GM13977 (cell line): ENCODE measurements at regions of chr9 and their contacts with region 1.

Region 1: DNA sequence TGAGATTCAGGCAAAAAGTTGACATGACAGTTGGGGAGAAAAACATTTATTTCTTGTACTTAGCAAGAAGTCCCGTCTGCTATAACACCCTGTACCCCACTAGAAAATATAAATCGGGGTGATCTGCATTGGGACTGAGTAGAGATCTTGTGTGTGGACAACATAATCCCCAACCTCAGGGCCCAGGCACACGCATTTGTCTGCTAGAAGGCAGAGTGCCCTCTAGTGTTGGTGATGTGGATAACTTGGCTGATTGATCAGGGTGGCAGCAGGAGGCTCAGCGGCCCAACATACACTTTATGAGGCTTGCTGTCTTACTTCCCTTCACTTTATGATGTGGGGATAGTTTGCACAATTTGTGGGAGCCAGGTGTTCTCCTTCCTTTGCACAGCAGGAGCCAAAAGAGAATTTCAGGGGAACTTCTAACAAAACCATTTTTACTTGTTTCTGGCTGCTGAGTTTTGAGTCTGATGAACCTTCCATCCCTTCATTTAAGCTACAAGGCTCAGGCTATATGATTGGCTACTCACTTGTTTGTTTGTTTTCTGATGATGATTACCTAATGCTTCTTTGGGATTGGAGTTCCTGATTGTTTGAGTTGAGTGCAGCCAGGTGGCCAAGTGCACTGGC is 263.2 kb downstream of the DMAC1 start:
- DNase-seq: peak; percentile 26
- CTCF ChIP-seq: peak; percentile 74

Region 2: DNA sequence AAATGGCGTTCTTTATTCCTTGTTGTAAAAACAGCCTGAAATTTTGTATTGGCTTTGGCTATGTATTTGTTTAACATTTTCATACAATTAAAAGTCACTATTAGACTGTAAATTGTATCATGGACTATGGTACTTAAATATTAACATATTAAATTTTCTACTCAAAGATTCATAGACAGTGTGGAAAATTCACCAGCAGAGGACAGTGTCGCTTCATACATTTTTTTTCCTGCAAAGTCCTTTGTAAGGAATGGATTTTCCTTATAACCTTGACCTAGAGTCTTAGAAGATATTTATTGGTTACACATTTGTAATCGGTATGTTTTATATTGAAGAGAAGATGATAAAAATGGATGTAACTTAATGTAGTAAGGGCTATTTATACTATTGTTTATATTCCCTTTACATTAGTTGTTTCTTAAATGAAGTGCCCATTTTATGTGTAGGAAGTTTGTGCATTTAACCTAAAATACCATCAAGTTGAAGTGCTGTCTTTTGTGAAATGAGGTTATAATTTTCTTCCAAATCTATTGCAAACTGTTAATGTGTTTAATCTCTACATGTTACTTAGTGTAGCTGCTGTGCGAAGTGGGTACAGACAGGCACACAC is 628.5 kb before region 1 on chr9:
- in situ Hi-C with region 1: loop called (anchors 25 kb)
- DNase-seq: no peak
- CTCF ChIP-seq: peak; percentile 30

Region 3: DNA sequence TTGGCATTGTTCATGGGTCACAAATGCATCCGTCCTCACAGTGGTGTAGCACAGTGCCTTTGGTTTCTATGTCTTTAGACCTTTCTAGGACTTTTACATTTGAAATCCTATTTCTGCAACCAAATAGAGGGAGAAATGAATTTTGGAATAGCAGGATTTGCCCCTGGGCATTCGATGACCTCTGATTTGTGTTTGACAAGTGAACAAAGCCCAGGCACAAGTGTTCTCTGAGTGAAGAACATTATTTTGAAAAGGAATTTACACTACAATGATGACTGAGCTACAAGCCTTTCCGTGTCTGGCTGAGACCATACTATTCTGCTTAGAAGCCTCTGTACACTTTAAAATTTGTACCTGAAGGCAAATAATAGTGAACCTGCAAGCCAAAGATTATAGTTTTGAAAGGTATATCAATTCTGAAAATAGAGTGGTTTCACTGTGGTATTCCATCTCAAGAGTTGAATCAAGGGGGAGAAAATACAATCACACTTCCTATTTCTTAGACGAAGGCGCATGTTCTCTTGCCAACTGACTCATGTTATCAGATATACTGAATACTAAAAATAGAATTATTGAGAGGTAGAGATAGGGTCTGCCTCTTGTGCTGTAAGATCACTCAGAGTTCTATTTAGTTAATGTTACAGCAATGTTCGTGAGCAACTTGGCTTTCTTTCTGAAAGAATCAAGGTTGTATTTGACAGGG is 481.1 kb before region 1 on chr9:
- in situ Hi-C with region 1: loop called (anchors 25 kb)
- DNase-seq: peak; percentile 7
- CTCF ChIP-seq: no peak

Region 4: DNA sequence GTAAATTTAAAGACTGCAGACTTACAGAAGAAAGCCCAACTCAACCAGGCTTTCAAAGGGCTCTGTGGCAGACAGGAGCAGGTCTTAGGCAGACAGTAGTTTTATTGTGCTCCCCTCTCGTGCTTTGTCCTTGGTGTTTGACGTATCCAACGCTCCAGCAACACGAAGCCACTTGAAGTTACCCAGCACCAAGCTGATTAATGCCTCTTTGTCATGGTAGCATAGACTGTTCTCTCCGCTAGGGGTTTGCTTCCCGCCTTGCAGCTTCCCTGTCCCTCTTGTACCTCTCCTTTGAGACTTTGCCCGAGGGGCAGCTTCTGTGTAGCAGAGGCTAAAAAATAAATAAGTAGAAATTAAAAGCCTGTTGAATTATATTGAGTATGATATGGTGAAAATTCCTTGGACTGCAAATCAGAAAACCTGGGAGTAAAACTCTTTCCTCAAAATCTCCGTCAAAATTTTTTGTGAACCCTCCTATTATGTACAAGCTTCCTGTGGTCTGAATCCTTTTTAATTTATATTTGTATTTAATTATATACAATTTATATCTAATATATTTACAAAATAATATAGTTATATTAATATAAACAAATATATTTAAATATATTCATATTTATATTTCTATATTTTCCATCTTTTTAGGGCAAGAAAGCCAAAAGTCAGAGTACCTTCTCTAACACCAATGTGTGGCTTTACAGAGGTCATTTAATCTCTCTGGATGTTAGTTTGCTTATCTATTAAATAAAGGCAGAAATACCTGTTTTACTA is 142.2 kb before region 1 on chr9:
- in situ Hi-C with region 1: no loop called
- DNase-seq: no peak
- CTCF ChIP-seq: no peak

Region 5: DNA sequence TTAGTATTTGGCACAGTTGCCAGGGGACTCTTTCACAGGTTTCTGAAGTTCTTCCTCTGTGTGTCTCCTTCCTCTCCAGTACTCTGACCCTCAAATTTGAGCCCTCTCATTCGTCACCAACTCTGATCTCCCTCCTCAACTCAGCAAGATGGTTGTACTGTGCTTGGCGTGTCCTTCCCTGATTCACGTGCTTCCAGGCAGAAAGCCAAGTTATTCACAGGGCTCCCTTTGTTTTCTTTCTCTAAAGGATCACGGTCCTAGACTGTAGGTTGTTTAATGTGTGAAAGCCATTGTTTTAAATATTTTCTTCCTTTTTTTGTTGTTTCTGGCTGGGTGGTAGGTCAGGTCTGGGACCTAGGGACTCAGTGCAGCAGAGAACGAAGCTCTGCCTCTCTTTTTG is 120.2 kb after region 1 on chr9:
- in situ Hi-C with region 1: no loop called
- DNase-seq: no peak
- CTCF ChIP-seq: no peak